T-cell (primary cell): ENCODE measurements at regions of chr9 and their contacts with region 1.

Region 1: GRCh38 chr9:14395317-14396082 is 81.6 kb upstream of the NFIB start:
- DNase-seq: no peak
- ATAC-seq: no peak
- H3K4me3 ChIP-seq: no peak overlapping the region
- H3K4me3 Mint-ChIP-seq: no peak overlapping the region
- H3K27ac ChIP-seq: no peak overlapping the region
- H3K27ac Mint-ChIP-seq: no peak overlapping the region
- H3K4me1 ChIP-seq: no peaks in the 10 kb centered on the region
- H3K4me1 Mint-ChIP-seq: no peaks in the 10 kb centered on the region
- H3K27me3 ChIP-seq: no peaks in the 10 kb centered on the region
- H3K27me3 Mint-ChIP-seq: peaks cover 0 to 3% of the 10 kb centered on the region in 2 donors

Region 2: GRCh38 chr9:13878241-13878711 is 517.2 kb before region 1 on chr9:
- CTCF ChIA-PET with region 1: no interaction called
- POLR2A ChIA-PET with region 1: no interaction called
- DNase-seq: no peak
- ATAC-seq: no peak
- H3K4me3 ChIP-seq: no peak overlapping the region
- H3K4me3 Mint-ChIP-seq: no peak overlapping the region
- H3K27ac ChIP-seq: no peak overlapping the region
- H3K27ac Mint-ChIP-seq: no peak overlapping the region
- H3K4me1 ChIP-seq: no peaks in the 10 kb centered on the region
- H3K4me1 Mint-ChIP-seq: no peaks in the 10 kb centered on the region
- H3K27me3 ChIP-seq: no peaks in the 10 kb centered on the region
- H3K27me3 Mint-ChIP-seq: no peaks in the 10 kb centered on the region

Region 3: DNA sequence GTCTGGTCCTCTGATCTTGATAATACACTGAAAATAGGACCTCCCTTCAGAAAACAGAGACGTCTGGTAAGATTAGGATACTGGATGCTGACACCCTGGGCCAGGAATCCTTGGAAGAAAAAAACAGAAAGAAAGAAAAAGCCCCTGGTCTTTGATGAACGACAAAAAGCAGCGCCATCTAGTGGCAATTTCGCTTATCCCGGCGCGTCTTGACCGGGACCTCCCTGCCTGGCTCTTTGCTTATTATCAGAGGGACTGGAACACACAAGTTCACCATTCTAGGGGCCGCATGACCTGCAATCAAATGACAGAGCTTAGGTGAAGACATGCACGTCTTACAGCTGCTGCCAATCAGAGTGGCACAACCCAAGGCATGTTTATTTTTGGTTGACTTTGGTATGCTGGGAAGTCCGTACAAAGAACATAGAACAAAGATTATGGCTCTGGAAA is 33.3 kb after region 1 on chr9:
- CTCF ChIA-PET with region 1: no interaction called
- POLR2A ChIA-PET with region 1: interaction called in 1 of 2 experiments, 11 read pairs
- DNase-seq: peak in 11 of 35 experiments; percentile 1 to 45 (median 5)
- ATAC-seq: no peak
- H3K4me3 ChIP-seq: no peak overlapping the region
- H3K4me3 Mint-ChIP-seq: no peak overlapping the region
- H3K27ac ChIP-seq: no peak overlapping the region
- H3K27ac Mint-ChIP-seq: no peak overlapping the region
- H3K4me1 ChIP-seq: no peaks in the 10 kb centered on the region
- H3K4me1 Mint-ChIP-seq: peaks cover 5 to 11% (median 6%) of the 10 kb centered on the region in 3 donors
- H3K27me3 ChIP-seq: no peaks in the 10 kb centered on the region
- H3K27me3 Mint-ChIP-seq: peaks cover 17 to 23% of the 10 kb centered on the region in 2 donors

Region 4: GRCh38 chr9:14511452-14511851 is 116.0 kb after region 1 on chr9:
- CTCF ChIA-PET with region 1: no interaction called
- POLR2A ChIA-PET with region 1: no interaction called
- DNase-seq: no peak
- ATAC-seq: no peak
- H3K4me3 ChIP-seq: no peak overlapping the region
- H3K4me3 Mint-ChIP-seq: no peak overlapping the region
- H3K27ac ChIP-seq: no peak overlapping the region
- H3K27ac Mint-ChIP-seq: no peak overlapping the region
- H3K4me1 ChIP-seq: no peaks in the 10 kb centered on the region
- H3K4me1 Mint-ChIP-seq: no peaks in the 10 kb centered on the region
- H3K27me3 ChIP-seq: no peaks in the 10 kb centered on the region
- H3K27me3 Mint-ChIP-seq: peaks cover 2% of the 10 kb centered on the region in 2 donors